A549 (cell line): ENCODE measurements at regions of chr14 and their contacts with region 1.

Region 1: GRCh38 chr14:103104654-103105452 is 10.3 kb downstream of the EXOC3L4 start:
- DNase-seq: peak in 1 of 2 experiments; percentile 81
- ATAC-seq: peak; percentile 37 to 71
- H3K4me3 ChIP-seq: peak overlapping the region; percentile 42
- H3K27ac ChIP-seq: peak overlapping the region; percentile 94
- H3K4me1 ChIP-seq: peaks cover 74% of the 10 kb centered on the region
- CTCF ChIP-seq: peak; percentile 94
- EP300 ChIP-seq: no peak
- POLR2A ChIP-seq: no peak
- RAD21 ChIP-seq: peak; percentile 92 to 98

Region 2: GRCh38 chr14:102551995-102552705 is 552.7 kb before region 1 on chr14:
- CTCF ChIA-PET with region 1: no interaction called
- POLR2A ChIA-PET with region 1: no interaction called
- DNase-seq: peak in 1 of 2 experiments; percentile 54
- ATAC-seq: peak; percentile 57 to 73; a peak in 4 of 6 replicates
- H3K4me3 ChIP-seq: no peak overlapping the region
- H3K27ac ChIP-seq: peak overlapping the region; percentile 50 to 74; a peak in 5 of 6 replicates
- H3K4me1 ChIP-seq: peaks cover 12% of the 10 kb centered on the region
- CTCF ChIP-seq: no peak
- EP300 ChIP-seq: no peak
- POLR2A ChIP-seq: no peak
- RAD21 ChIP-seq: no peak

Region 3: DNA sequence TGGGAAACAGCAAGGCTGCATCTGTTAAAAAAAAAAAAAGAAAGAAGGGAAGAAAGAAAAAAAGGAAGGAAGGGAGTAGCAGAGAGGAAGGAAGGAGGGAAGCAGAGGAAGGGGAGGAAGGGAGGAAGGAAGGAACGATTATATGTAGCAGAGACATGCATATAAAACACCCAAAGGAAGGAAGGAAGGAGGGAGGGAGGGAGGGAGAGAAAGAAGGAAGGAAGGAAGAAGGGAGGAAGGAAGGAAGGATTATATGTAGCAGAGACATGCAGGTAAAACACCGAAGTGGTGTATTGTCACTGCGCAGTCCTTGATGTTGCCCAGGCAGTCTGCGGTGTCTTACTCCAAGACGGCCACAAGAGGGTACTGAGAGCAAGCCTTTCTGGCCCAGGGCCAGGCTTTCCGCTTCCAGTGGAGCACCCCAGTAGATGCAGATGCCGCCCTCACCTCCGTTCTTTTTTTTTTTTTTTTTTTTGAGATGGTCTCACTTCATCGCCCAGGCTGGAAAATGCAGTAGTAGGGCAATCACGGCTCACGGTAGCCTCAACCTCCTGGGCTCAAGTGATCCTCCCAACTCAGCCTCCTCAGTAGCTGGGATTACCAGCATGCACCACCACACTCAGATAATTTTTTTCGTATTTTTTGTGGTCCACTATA is 26.6 kb before region 1 on chr14:
- CTCF ChIA-PET with region 1: interaction called, 259 read pairs
- POLR2A ChIA-PET with region 1: interaction called, 3 read pairs
- DNase-seq: peak; percentile 86 to 87
- ATAC-seq: peak; percentile 26 to 35; a peak in 4 of 6 replicates
- H3K4me3 ChIP-seq: no peak overlapping the region
- H3K27ac ChIP-seq: peak overlapping the region in 1 of 2 experiments; percentile 56; a peak in 3 of 6 replicates
- H3K4me1 ChIP-seq: peaks cover 21% of the 10 kb centered on the region
- CTCF ChIP-seq: peak; percentile 75
- EP300 ChIP-seq: no peak
- POLR2A ChIP-seq: no peak
- RAD21 ChIP-seq: peak; percentile 73 to 77

Region 4: DNA sequence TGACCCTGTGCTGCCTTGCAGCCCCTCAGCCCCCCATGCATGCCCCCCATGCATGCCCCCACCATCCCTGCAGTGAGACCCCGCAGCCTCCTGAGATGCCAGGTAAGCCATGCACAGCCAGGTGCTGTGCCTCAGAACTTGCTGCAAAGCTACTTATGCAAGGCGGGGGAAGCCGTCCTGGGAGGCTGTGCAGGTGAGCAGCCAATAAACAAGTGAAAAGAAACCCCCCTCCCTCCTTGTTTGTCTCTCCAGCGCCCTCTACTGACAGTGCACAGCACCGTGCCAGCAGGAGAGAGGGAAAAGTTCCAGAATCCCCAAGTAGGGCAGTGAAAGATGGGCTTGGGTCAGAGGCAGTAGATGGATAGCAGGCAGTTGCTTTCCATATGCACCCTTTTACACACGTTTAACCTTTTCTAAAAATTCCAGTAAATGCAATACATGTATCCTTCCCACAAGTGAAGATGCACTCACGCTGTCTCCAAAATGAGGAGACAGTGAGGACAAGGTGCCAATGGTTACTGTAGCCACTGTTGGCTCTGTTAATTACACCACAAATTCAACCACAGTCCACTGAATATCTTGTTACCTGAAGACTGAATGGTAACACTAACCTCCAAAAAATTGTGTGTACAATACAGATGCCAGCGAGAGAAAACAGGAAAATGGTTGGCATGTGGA is 36.4 kb after region 1 on chr14:
- CTCF ChIA-PET with region 1: interaction called, 544 read pairs
- POLR2A ChIA-PET with region 1: interaction called, 6 read pairs
- DNase-seq: peak; percentile 71 to 78
- ATAC-seq: peak in 1 of 2 experiments; percentile 13; a peak in 3 of 6 replicates
- H3K4me3 ChIP-seq: no peak overlapping the region
- H3K27ac ChIP-seq: peak overlapping the region; percentile 16 to 81; a peak in 5 of 6 replicates
- H3K4me1 ChIP-seq: peaks cover 62% of the 10 kb centered on the region
- CTCF ChIP-seq: peak; percentile 71
- EP300 ChIP-seq: no peak
- POLR2A ChIP-seq: no peak
- RAD21 ChIP-seq: peak; percentile 63 to 68

Region 5: GRCh38 chr14:103177376-103177775 is 72.5 kb after region 1 on chr14:
- CTCF ChIA-PET with region 1: interaction called, 261 read pairs
- POLR2A ChIA-PET with region 1: no interaction called
- DNase-seq: no peak
- ATAC-seq: no peak
- H3K4me3 ChIP-seq: no peak overlapping the region
- H3K27ac ChIP-seq: no peak overlapping the region
- H3K4me1 ChIP-seq: 0 out of 3 replicates have a peak, but pooled peaks cover 3% of the 10 kb centered on the region
- CTCF ChIP-seq: no peak
- EP300 ChIP-seq: no peak
- POLR2A ChIP-seq: no peak
- RAD21 ChIP-seq: no peak

Region 6: DNA sequence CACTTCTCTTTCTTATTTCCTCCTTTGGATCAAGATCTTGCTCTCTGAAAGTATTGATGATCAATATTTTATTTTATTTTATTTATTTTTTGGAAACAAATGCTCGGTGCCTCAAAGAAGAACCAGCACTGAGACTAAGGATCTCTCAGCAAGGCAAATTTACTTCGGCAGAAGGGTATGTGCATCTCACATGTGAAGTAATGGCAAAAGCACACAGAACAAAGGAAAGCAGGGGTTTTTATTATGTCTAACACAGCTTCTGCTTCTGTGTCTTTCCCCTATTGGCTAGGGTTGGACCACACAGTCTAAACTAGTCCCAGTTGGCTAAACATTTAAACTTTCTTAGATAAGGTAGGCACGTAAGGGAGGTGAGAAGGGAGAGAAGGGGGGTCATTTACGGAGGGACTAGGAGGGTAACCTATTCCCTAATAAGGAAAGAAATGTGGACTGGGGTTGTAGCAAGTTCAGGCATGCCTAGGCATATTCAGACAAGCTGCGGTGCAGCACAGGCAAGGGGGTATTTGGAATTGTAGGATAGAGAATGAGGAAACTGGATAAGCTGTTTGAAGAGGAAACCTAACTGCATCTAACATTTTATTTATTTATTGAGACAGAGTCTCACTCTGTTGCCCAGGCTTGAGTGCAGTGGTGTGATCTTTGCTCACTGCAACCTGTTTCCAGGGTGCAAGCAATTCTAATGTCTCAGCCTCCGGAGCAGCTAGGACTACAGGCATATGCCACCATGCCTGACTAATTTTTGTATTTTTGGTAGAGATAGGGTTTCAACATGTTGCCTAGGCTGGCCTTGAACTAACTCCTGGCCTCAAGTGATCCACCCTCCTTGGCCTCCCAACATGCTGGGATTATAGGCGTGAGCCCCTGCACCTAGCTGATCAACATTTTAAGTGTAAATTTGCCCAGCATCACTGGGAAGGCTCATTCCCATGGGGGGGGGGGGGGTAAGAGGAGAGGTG is 139.2 kb after region 1 on chr14:
- CTCF ChIA-PET with region 1: interaction called, 17 read pairs
- POLR2A ChIA-PET with region 1: no interaction called
- DNase-seq: peak in 1 of 2 experiments; percentile 71
- ATAC-seq: no peak
- H3K4me3 ChIP-seq: no peak overlapping the region
- H3K27ac ChIP-seq: peak overlapping the region; percentile 80 to 88
- H3K4me1 ChIP-seq: peaks cover 23% of the 10 kb centered on the region
- CTCF ChIP-seq: no peak
- EP300 ChIP-seq: no peak
- POLR2A ChIP-seq: no peak
- RAD21 ChIP-seq: no peak

Region 7: GRCh38 chr14:103292426-103293374 is 187.8 kb after region 1 on chr14:
- CTCF ChIA-PET with region 1: interaction called, 345 read pairs
- POLR2A ChIA-PET with region 1: no interaction called
- DNase-seq: peak; percentile 71 to 79
- ATAC-seq: peak; percentile 91 to 96
- H3K4me3 ChIP-seq: no peak overlapping the region
- H3K27ac ChIP-seq: peak overlapping the region; percentile 44 to 60; a peak in 5 of 6 replicates
- H3K4me1 ChIP-seq: peaks cover 11% of the 10 kb centered on the region; the same call in 1 of the 3 replicates
- CTCF ChIP-seq: peak; percentile 95
- EP300 ChIP-seq: no peak
- POLR2A ChIP-seq: no peak
- RAD21 ChIP-seq: peak; percentile 98 to 99